GM10248 (cell line): ENCODE measurements at regions of chr6 and their contacts with region 1.

Region 1: GRCh38 chr6:161370880-161371279 is 97.0 kb upstream of the AGPAT4 start:
- DNase-seq: peak; percentile 79
- CTCF ChIP-seq: peak; percentile 90

Region 2: GRCh38 chr6:160733050-160733646 is 637.7 kb before region 1 on chr6:
- CTCF ChIA-PET with region 1: interaction called, 73 read pairs
- POLR2A ChIA-PET with region 1: no interaction called
- DNase-seq: peak; percentile 43
- CTCF ChIP-seq: peak; percentile 78

Region 3: GRCh38 chr6:160766989-160767660 is 603.8 kb before region 1 on chr6:
- CTCF ChIA-PET with region 1: interaction called, 13 read pairs
- POLR2A ChIA-PET with region 1: no interaction called
- DNase-seq: peak; percentile 75
- CTCF ChIP-seq: peak; percentile 85

Region 4: DNA sequence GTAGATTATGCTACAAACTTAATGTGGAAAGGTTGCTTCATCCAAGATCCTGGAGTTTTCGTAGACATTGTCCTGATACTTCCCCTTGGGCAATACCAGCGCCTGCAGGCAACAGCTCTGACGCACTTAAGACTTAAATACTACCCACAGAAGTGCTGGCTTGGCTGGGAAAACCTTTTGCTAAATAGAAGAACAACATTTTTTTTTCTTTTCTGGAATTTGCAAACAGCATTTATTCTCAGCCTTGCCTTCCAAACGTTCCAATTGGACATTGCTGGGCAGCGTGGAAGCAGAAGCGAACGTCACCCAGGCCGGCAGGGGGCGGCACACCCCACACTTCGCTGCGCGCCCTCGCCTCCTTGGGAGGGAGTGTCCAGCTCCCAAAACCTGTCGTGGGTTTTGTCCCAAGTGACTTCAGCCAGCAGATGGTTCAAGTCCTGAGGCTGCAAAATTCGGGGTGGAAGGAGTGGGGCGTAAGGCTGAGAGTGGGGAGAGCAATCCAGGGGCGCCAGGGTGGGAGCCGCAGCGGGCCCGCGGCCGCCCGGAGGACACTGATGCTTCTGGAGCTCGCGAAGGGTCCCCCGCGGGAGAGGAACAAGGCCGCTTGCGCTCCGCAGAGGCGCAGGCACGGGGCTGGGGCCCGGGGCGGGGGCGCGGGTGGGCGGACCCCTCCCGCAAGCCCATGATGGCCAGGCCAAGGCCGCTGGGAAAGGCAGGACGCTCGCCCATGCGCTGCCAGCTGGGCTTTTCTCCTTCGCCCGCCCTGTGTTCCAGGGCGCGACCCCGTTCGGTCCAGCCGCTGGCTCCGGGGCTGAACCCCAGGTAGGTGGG is 440.1 kb before region 1 on chr6:
- CTCF ChIA-PET with region 1: interaction called, 249 read pairs
- POLR2A ChIA-PET with region 1: interaction called, 3 read pairs
- DNase-seq: peak; percentile 81
- CTCF ChIP-seq: peak; percentile 92

Region 5: DNA sequence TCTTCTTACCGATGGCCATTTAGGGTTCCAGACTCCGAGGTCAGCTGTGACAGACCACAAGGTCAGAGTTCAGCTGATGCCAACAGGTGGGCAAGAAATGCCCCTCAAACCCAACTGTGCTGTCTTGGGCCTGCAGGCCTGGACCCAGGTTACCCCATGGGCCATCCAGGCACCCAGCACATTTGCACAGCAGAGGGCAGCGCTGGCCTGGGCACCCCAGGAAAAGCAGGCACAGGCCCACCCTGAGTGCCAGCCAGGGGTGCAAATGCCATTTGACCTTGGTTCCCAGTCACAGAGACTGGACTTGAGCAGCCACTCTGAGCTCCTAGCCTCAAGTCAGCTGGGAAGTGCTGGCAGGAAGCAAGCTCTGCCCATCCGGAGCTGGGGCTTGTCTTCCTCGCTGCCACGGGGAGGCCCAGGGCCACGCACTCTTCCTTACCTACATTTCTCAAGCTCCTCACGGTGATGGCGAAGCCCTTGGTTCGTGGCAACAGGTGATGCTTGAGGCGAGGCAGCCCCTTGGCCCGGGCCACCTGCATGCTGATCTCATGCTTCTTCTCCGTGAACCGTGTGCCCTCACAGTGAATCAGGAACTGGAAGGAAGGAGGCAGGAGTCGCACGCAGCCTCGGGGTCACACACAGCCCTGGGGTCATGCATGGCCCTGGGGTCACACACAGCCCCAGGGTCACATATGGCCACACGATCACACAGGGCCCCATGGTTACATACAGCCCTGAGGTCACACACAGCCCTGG is 217.8 kb before region 1 on chr6:
- CTCF ChIA-PET with region 1: interaction called, 112 read pairs
- POLR2A ChIA-PET with region 1: no interaction called
- DNase-seq: peak; percentile 44
- CTCF ChIP-seq: peak; percentile 33

Region 6: DNA sequence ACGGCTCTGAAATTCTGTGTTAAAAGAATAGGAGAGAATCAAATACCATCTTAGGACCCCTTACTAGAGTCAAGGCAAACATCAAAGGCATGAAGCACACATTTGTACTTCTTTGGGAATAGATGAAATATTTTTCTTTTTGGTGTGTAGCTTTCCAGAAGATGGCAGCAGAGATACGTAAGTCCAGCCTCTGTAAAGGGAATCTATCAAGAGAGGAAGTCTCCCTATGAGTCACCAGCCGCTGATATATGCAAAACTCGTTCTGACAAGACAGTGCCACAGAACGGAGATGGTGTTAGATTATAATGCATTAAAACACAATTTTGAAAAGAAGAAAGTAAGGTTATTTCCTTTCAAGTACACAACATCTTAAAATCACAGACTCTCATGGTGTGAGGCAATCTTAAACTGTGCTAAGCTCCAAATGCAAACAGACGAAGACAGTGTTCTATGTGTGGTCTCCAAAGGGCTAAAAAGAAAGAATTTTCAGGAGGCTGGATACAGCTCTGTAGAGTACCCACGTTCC is 23.0 kb after region 1 on chr6:
- CTCF ChIA-PET with region 1: interaction called, 61 read pairs
- POLR2A ChIA-PET with region 1: no interaction called
- DNase-seq: peak; percentile 78
- CTCF ChIP-seq: peak; percentile 52

Region 7: DNA sequence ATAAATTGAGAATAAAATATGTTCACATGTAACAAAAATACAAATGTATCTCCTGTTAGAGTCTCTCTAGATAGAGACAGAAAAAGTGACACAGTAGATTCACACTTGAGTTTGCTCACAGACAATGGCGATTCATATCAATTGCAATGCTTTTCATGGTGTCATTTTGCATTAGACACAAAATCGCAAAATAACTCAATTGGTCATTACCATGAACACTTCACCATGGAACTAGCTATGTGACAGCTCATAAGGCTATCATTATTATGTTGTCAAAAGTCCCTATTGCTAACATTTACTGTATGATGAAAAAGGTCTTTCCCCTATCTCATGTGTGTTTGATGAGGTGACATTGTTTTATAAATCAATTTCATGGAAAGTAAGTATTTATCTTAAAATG is 152.5 kb after region 1 on chr6:
- CTCF ChIA-PET with region 1: no interaction called
- POLR2A ChIA-PET with region 1: no interaction called
- DNase-seq: no peak
- CTCF ChIP-seq: no peak